HCT116 (cell line): ENCODE measurements at regions of chr12 and their contacts with region 1.

Region 1: DNA sequence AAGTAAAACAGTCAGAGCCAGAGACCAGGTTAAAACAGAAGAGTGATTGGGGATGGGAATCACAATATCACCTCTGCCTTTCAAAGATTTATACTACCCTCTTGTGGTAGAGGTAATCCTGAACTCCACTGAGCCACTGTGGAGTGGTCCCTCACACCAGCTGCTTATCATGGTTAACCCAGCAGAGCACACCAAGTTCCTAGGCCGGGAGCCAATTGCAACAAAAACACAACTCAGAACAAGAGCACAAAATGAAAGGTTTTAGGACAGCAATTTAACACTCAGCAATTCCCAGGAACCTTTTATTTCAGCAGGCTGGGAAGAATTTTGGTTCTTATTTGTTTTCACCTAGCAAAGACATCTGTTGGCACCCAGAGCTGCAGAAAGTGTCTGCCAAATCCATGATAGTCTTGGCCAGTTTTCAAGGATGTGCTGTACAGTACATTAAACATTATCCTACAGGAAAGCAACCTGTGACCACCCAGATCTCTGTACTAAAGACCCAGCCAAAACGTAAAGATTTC is 220.5 kb upstream of the ATXN7L3B start:
- DNase-seq: no peak
- ATAC-seq: peak; percentile 97
- H3K4me3 ChIP-seq: no peak overlapping the region
- H3K27ac ChIP-seq: no peak overlapping the region
- H3K4me1 ChIP-seq: no peaks in the 10 kb centered on the region
- H3K27me3 ChIP-seq: no peaks in the 10 kb centered on the region
- CTCF ChIP-seq: peak; percentile 39 to 61 (median 45); a peak in 5 of 6 replicates
- POLR2A ChIP-seq: no peak
- RAD21 ChIP-seq: peak; percentile 77

Region 2: GRCh38 chr12:73935817-73936216 is 381.3 kb before region 1 on chr12:
- CTCF ChIA-PET with region 1: interaction called, 4 read pairs
- POLR2A ChIA-PET with region 1: no interaction called
- RAD21 ChIA-PET with region 1: interaction called in 1 of 2 experiments, 5 read pairs
- intact Hi-C with region 1: loop called (anchors 5 kb)
- DNase-seq: peak; percentile 24
- ATAC-seq: peak; percentile 78
- H3K4me3 ChIP-seq: no peak overlapping the region
- H3K27ac ChIP-seq: no peak overlapping the region
- H3K4me1 ChIP-seq: no peaks in the 10 kb centered on the region
- H3K27me3 ChIP-seq: no peaks in the 10 kb centered on the region
- CTCF ChIP-seq: peak; percentile 37 to 54 (median 52); a peak in 4 of 6 replicates
- POLR2A ChIP-seq: no peak
- RAD21 ChIP-seq: peak; percentile 72

Region 3: GRCh38 chr12:74021937-74022336 is 295.2 kb before region 1 on chr12:
- CTCF ChIA-PET with region 1: no interaction called
- POLR2A ChIA-PET with region 1: no interaction called
- RAD21 ChIA-PET with region 1: no interaction called
- intact Hi-C with region 1: loop called (anchors 10 kb)
- DNase-seq: peak; percentile 68
- ATAC-seq: peak; percentile 100
- H3K4me3 ChIP-seq: no peak overlapping the region
- H3K27ac ChIP-seq: no peak overlapping the region
- H3K4me1 ChIP-seq: peaks cover 0 to 3% of the 10 kb centered on the region in 2 experiments; a peak in 2 of 4 replicates
- H3K27me3 ChIP-seq: no peaks in the 10 kb centered on the region
- CTCF ChIP-seq: peak; percentile 49 to 79 (median 77); a peak in 5 of 6 replicates
- POLR2A ChIP-seq: no peak
- RAD21 ChIP-seq: peak; percentile 75

Region 4: GRCh38 chr12:74111688-74112360 is 205.3 kb before region 1 on chr12:
- CTCF ChIA-PET with region 1: interaction called, 5 read pairs
- POLR2A ChIA-PET with region 1: no interaction called
- RAD21 ChIA-PET with region 1: no interaction called
- intact Hi-C with region 1: loop called (anchors 10 kb)
- DNase-seq: peak; percentile 52
- ATAC-seq: peak; percentile 97
- H3K4me3 ChIP-seq: no peak overlapping the region
- H3K27ac ChIP-seq: no peak overlapping the region
- H3K4me1 ChIP-seq: peaks cover 0 to 3% of the 10 kb centered on the region in 2 experiments; a peak in 1 of 4 replicates
- H3K27me3 ChIP-seq: no peaks in the 10 kb centered on the region
- CTCF ChIP-seq: peak; percentile 63 to 76 (median 76); a peak in 5 of 6 replicates
- POLR2A ChIP-seq: no peak
- RAD21 ChIP-seq: peak; percentile 86

Region 5: DNA sequence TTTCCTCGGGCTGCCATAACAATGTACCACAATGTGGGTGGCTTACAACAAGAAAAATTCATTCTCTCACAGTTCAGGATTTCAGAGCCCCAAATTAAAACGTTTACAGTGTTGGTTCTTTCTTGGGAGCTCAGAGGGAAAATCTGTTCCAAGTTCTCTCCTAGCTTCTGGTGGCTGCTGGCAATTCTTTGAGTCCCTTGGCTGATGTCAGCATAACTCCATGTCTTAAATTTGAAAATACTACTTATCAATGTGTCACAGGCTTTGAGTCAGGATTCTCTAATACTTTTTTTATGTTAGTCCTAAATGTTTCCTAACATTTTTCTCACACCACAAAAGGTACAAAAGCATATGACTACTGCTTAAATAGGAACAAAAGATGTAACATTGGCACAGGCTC is 22.1 kb after region 1 on chr12:
- CTCF ChIA-PET with region 1: no interaction called
- POLR2A ChIA-PET with region 1: no interaction called
- RAD21 ChIA-PET with region 1: no interaction called
- intact Hi-C with region 1: no loop called
- DNase-seq: no peak
- ATAC-seq: no peak
- H3K4me3 ChIP-seq: no peak overlapping the region
- H3K27ac ChIP-seq: no peak overlapping the region
- H3K4me1 ChIP-seq: peaks cover 20 to 70% of the 10 kb centered on the region in 2 experiments
- H3K27me3 ChIP-seq: no peaks in the 10 kb centered on the region
- CTCF ChIP-seq: no peak
- POLR2A ChIP-seq: no peak
- RAD21 ChIP-seq: no peak